Calu3 (cell line): ENCODE measurements at regions of chr3 and their contacts with region 1.

Region 1: DNA sequence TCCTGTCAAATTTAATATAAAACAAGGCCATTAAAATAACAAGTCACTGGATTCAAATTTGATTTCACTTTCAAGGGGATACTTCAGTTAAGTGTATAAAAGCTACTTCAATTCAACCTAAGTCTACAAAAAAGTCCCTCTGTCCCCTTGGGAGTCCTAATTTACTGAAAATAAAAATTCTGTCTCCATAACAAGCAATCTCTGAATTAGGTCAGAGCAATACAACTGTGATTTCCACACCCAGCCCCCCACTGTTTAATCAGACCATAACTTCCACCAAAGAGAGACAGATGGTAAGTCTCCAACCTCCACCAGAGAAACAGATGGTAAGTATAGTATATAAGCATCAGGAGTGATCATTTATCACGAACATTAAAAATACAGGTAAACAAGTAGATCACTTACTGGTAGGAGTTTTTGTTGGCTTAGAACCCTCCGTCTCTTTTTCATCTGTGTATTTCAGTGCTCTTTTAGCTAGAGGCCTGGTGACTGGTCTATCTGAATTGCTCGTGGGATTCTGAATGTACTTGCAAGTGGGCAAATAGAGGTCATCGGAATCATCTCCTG is 12.1 kb downstream of the SGO1 start:
- DNase-seq: no peak
- H3K4me3 Mint-ChIP-seq: no peak overlapping the region
- H3K27ac Mint-ChIP-seq: no peak overlapping the region
- H3K4me1 Mint-ChIP-seq: no peaks in the 10 kb centered on the region
- H3K27me3 Mint-ChIP-seq: no peaks in the 10 kb centered on the region
- CTCF ChIP-seq: no peak

Region 2: GRCh38 chr3:20039766-20040475 is 134.0 kb before region 1 on chr3 and contains the start of gene KAT2B:
- CTCF ChIA-PET with region 1: interaction called, 3 read pairs
- intact Hi-C with region 1: loop called (anchors 5 kb)
- DNase-seq: peak; percentile 82
- H3K4me3 Mint-ChIP-seq: peak within 1 kb of the TSS; percentile 84
- H3K27ac Mint-ChIP-seq: peak within 1 kb of the TSS; percentile 89
- H3K4me1 Mint-ChIP-seq: peaks cover 38% of the 10 kb centered on the region
- H3K27me3 Mint-ChIP-seq: no peaks in the 10 kb centered on the region
- CTCF ChIP-seq: peak; percentile 83
- total RNA-seq, gene KAT2B: 12.0 and 13.8 TPM in 2 replicates

Region 3: GRCh38 chr3:20185701-20186598 is 12.0 kb after region 1 on chr3 and contains the start of gene SGO1:
- CTCF ChIA-PET with region 1: no interaction called
- intact Hi-C with region 1: no loop called
- DNase-seq: peak; percentile 98
- H3K4me3 Mint-ChIP-seq: no peak within 1 kb of the TSS
- H3K27ac Mint-ChIP-seq: no peak within 1 kb of the TSS
- H3K4me1 Mint-ChIP-seq: no peaks in the 10 kb centered on the region
- H3K27me3 Mint-ChIP-seq: no peaks in the 10 kb centered on the region
- CTCF ChIP-seq: no peak
- total RNA-seq, gene SGO1: 29.4 and 30.2 TPM in 2 replicates

Region 4: GRCh38 chr3:20246662-20247061 is 72.7 kb after region 1 on chr3:
- CTCF ChIA-PET with region 1: no interaction called
- intact Hi-C with region 1: no loop called
- DNase-seq: no peak
- H3K4me3 Mint-ChIP-seq: no peak overlapping the region
- H3K27ac Mint-ChIP-seq: no peak overlapping the region
- H3K4me1 Mint-ChIP-seq: no peaks in the 10 kb centered on the region
- H3K27me3 Mint-ChIP-seq: no peaks in the 10 kb centered on the region
- CTCF ChIP-seq: no peak